PC-3 (cell line): ENCODE measurements at regions of chrX and their contacts with region 1.

Region 1: GRCh38 chrX:12701628-12702027 is 89.6 kb upstream of the PRPS2 start:
- DNase-seq: peak; percentile 84
- ATAC-seq: peak; percentile 97
- H3K4me3 ChIP-seq: no peak overlapping the region
- H3K27ac ChIP-seq: no peak overlapping the region
- H3K4me1 ChIP-seq: 0 out of 2 replicates have a peak, but pooled peaks cover 3% of the 10 kb centered on the region
- H3K27me3 ChIP-seq: no peaks in the 10 kb centered on the region
- CTCF ChIP-seq: peak; percentile 79

Region 2: GRCh38 chrX:11890836-11891514 is 810.7 kb before region 1 on chrX:
- CTCF ChIA-PET with region 1: no interaction called
- POLR2A ChIA-PET with region 1: no interaction called
- intact Hi-C with region 1: no loop called
- DNase-seq: no peak
- ATAC-seq: no peak
- H3K4me3 ChIP-seq: no peak overlapping the region
- H3K27ac ChIP-seq: no peak overlapping the region
- H3K4me1 ChIP-seq: peaks cover 28% of the 10 kb centered on the region
- H3K27me3 ChIP-seq: no peaks in the 10 kb centered on the region
- CTCF ChIP-seq: no peak

Region 3: GRCh38 chrX:12080265-12080664 is 621.4 kb before region 1 on chrX:
- CTCF ChIA-PET with region 1: interaction called, 5 read pairs
- POLR2A ChIA-PET with region 1: no interaction called
- intact Hi-C with region 1: loop called (anchors 1 kb)
- DNase-seq: peak; percentile 71
- ATAC-seq: no peak
- H3K4me3 ChIP-seq: no peak overlapping the region
- H3K27ac ChIP-seq: no peak overlapping the region
- H3K4me1 ChIP-seq: no peaks in the 10 kb centered on the region
- H3K27me3 ChIP-seq: no peaks in the 10 kb centered on the region
- CTCF ChIP-seq: peak; percentile 82

Region 4: GRCh38 chrX:12319003-12319519 is 382.6 kb before region 1 on chrX:
- CTCF ChIA-PET with region 1: no interaction called
- POLR2A ChIA-PET with region 1: no interaction called
- intact Hi-C with region 1: loop called (anchors 10 kb)
- DNase-seq: peak; percentile 32
- ATAC-seq: peak; percentile 51
- H3K4me3 ChIP-seq: no peak overlapping the region
- H3K27ac ChIP-seq: no peak overlapping the region
- H3K4me1 ChIP-seq: peaks cover 3% of the 10 kb centered on the region; the same call in 1 of the 2 replicates
- H3K27me3 ChIP-seq: no peaks in the 10 kb centered on the region
- CTCF ChIP-seq: peak; percentile 50

Region 5: GRCh38 chrX:12497832-12498591 is 203.6 kb before region 1 on chrX:
- CTCF ChIA-PET with region 1: interaction called, 3 read pairs
- POLR2A ChIA-PET with region 1: no interaction called
- intact Hi-C with region 1: loop called (anchors 1 kb)
- DNase-seq: peak; percentile 46
- ATAC-seq: peak; percentile 62; the same call in 1 of the 2 replicates
- H3K4me3 ChIP-seq: no peak overlapping the region
- H3K27ac ChIP-seq: no peak overlapping the region
- H3K4me1 ChIP-seq: no peaks in the 10 kb centered on the region
- H3K27me3 ChIP-seq: no peaks in the 10 kb centered on the region
- CTCF ChIP-seq: peak; percentile 69

Region 6: GRCh38 chrX:12901486-12901885 is 199.9 kb after region 1 on chrX:
- CTCF ChIA-PET with region 1: no interaction called
- POLR2A ChIA-PET with region 1: no interaction called
- intact Hi-C with region 1: loop called (anchors 1 kb)
- DNase-seq: peak; percentile 79
- ATAC-seq: peak; percentile 68
- H3K4me3 ChIP-seq: no peak overlapping the region
- H3K27ac ChIP-seq: no peak overlapping the region
- H3K4me1 ChIP-seq: no peaks in the 10 kb centered on the region
- H3K27me3 ChIP-seq: no peaks in the 10 kb centered on the region
- CTCF ChIP-seq: peak; percentile 60